HepG2 (cell line): ENCODE measurements at regions of chr10 and their contacts with region 1.

Region 1: DNA sequence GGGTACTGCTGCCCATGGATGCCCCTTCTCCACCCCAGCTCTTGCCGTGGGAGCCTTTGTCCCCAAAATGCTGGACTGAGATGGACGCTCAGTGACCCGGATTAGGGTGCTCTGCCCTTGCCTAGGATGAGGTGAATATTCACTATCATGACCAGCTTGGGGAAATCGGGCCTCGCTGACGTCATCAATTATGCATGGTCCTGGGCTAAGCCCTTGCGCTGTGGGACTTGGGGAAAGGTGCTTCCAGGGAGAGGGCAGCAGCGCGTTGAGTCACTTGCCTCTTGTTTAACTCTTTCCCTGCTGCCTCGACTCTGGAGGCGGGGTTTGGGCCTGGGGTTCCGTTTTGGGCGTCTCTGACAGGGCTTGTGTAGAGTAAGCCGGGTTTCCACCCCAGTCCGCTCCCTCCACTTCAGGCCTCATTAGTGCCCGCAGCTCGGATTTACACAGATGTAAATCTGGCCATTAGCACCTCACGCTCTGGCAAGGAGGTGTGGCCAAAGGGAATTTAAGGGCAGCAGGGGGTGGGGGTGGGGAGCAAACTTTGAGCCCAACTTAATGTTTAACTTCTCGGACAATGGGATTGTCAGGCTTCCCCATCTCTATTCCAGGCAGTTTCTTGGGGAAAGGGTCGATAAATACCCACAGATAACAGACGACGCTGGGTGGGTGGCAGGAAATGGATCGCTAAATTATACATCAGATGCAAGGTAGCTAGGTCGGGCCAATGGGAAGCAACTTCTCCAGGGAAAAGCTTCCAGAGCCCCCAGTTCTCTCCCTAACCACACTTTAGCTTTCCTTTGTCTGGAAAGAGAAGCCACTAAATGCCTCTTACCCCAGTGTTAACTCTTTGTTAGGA is 51.3 kb upstream of the TCF7L2 start:
- DNase-seq: peak; percentile 90
- ATAC-seq: peak; percentile 82
- H3K4me3 ChIP-seq: peak overlapping the region; percentile 52 to 67 (median 53)
- H3K27ac ChIP-seq: peak overlapping the region; percentile 83
- H3K4me1 ChIP-seq: peaks cover 61% of the 10 kb centered on the region
- H3K27me3 ChIP-seq: no peaks in the 10 kb centered on the region
- CTCF ChIP-seq: peak; percentile 36
- EP300 ChIP-seq: peak in 1 of 2 experiments; percentile 79; a peak in 3 of 4 replicates
- POLR2A ChIP-seq: peak; percentile 54 to 56; a peak in 3 of 4 replicates
- RAD21 ChIP-seq: peak; percentile 30; the same call in 1 of the 2 replicates

Region 2: GRCh38 chr10:112663234-112664125 is 235.3 kb before region 1 on chr10:
- CTCF ChIA-PET with region 1: no interaction called
- POLR2A ChIA-PET with region 1: no interaction called
- in situ Hi-C with region 1: no loop called
- intact Hi-C with region 1: no loop called
- DNase-seq: peak; percentile 10
- ATAC-seq: no peak
- H3K4me3 ChIP-seq: no peak overlapping the region
- H3K27ac ChIP-seq: no peak overlapping the region
- H3K4me1 ChIP-seq: peaks cover 34% of the 10 kb centered on the region
- H3K27me3 ChIP-seq: no peaks in the 10 kb centered on the region
- CTCF ChIP-seq: no peak
- EP300 ChIP-seq: no peak
- POLR2A ChIP-seq: no peak
- RAD21 ChIP-seq: no peak

Region 3: DNA sequence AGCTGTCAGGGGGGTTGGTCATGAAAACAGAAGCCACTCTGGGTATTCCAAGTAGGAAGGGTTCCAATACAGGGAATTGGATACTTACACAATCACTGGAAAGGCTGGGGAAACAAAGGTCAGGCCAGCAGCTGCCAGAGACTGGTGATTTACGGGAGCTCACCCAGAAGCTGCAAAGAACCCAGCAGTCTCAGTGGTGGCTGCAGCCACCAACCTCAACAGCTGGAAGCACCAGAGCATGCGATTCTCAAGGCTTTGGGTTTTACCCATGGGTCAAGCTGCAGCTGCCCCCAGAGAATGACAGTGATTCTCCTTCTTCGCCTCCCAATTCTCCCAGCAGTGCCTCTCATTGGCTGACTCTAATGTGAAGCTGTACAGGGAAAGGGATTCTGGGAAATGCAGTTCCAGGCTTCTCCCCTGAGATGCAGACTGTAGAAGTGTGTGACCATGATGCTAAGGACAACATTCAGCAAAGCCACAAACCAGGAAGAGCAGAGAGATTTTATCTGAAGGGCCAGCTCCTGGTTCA is 55.9 kb before region 1 on chr10:
- CTCF ChIA-PET with region 1: no interaction called
- POLR2A ChIA-PET with region 1: interaction called, 9 read pairs
- in situ Hi-C with region 1: no loop called
- intact Hi-C with region 1: loop called (anchors 5 kb)
- DNase-seq: peak; percentile 52
- ATAC-seq: peak; percentile 89
- H3K4me3 ChIP-seq: peak overlapping the region; percentile 28 to 52 (median 39)
- H3K27ac ChIP-seq: no peak overlapping the region
- H3K4me1 ChIP-seq: peaks cover 40% of the 10 kb centered on the region
- H3K27me3 ChIP-seq: no peaks in the 10 kb centered on the region
- CTCF ChIP-seq: no peak
- EP300 ChIP-seq: no peak
- POLR2A ChIP-seq: no peak
- RAD21 ChIP-seq: no peak

Region 4: DNA sequence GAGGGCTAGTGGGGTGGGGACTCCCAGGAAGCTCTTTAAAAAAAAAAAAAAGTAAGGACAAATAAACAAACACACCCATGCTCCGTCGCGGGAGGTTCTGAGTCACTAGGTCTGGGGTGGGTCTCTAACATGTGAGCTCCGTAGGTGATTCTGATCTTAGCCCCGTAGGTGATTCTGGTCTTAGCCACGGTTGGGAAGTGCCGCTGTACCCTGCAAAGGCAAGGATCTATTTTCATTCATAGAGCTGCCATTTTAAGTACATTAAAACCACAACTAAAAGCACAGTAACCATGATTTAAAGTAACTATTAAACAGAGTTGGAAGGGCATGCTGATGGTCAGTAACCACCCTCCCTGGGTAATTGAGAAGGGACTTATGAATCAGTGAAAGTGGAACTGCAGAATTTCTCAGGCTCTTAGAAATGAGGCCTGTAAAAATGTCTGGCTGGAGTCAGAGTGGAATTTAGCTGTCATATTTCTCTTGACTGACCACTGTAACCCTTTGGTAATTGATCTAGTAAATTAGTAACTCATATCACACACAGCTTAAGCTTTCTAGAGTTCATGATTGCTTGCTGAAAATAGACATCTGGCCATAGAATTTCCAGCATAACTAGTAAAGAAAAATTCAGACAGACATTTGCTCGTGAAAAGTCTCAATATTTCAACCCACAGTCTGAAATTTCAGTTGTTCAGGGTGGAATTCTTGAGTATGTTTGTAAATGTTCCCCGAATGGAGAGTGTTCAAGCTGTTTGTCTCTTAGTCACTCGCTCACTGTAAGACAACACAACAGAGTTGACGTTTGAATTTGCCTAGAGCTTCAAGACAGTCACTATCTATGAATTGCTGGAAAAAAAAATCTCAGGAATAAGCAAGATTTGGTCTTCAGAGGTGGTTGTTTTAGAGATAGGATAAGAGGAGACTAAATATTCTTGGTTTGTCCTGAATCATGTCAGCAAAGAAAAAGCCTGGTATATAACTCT is 17.1 kb after region 1 on chr10:
- CTCF ChIA-PET with region 1: no interaction called
- POLR2A ChIA-PET with region 1: interaction called, 16 read pairs
- in situ Hi-C with region 1: no loop called
- intact Hi-C with region 1: no loop called
- DNase-seq: peak; percentile 58
- ATAC-seq: peak; percentile 89
- H3K4me3 ChIP-seq: peak overlapping the region; percentile 37 to 48 (median 41); a peak in 4 of 6 replicates
- H3K27ac ChIP-seq: peak overlapping the region; percentile 47
- H3K4me1 ChIP-seq: peaks cover 47% of the 10 kb centered on the region
- H3K27me3 ChIP-seq: no peaks in the 10 kb centered on the region
- CTCF ChIP-seq: no peak
- EP300 ChIP-seq: no peak
- POLR2A ChIP-seq: no peak
- RAD21 ChIP-seq: no peak

Region 5: GRCh38 chr10:113045147-113046055 is 146.6 kb after region 1 on chr10:
- CTCF ChIA-PET with region 1: no interaction called
- POLR2A ChIA-PET with region 1: no interaction called
- in situ Hi-C with region 1: no loop called
- intact Hi-C with region 1: no loop called
- DNase-seq: no peak
- ATAC-seq: no peak
- H3K4me3 ChIP-seq: no peak overlapping the region
- H3K27ac ChIP-seq: no peak overlapping the region
- H3K4me1 ChIP-seq: no peaks in the 10 kb centered on the region
- H3K27me3 ChIP-seq: no peaks in the 10 kb centered on the region
- CTCF ChIP-seq: no peak
- EP300 ChIP-seq: no peak
- POLR2A ChIP-seq: no peak
- RAD21 ChIP-seq: no peak